Mammary epithelial cell (primary cell): ENCODE measurements at regions of chr20 and their contacts with region 1.

Region 1: DNA sequence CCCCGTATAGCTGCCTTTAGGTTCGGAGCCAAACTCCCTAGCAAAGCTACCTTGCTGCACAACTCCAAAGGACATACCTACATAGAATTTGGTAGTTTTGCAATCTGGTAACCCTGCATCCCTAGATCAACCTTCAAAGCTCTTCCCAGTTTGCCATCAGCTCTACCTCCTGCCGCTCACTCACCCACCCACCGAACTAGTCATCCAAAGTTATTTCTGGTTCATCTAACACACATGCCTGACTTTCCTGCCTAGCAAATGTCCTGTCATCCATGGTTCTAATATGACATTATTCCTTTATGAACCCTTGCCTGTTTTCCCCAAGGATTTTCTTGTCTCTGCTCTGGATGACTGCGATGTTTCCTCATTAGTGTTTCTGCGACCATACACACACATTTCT is 21.6 kb downstream of the SPAG4 start:
- DNase-seq: no peak
- H3K4me3 ChIP-seq: no peak overlapping the region
- H3K27ac ChIP-seq: no peak overlapping the region
- H3K4me1 ChIP-seq: no peaks in the 10 kb centered on the region
- H3K27me3 ChIP-seq: no peaks in the 10 kb centered on the region
- CTCF ChIP-seq: no peak

Region 2: DNA sequence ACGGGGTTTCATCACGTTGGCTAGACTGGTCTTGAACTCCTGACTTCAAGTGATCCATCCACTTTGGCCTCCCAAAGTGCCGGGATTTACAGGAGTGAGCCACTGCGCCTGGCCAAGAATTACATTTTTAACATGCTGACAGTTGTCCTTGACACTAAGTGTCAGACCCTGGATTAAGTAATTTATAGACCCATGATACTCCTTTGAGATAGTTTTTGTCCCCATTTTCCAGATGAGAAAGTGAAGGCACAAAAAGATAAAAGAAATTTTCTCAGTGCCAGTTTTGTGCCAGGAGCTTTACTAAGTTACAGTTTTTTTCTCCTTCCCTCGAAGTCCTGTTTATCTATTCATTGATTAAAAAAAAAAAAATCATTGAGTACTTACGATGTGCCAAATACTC is 480.3 kb before region 1 on chr20:
- CTCF ChIA-PET with region 1: interaction called, 18 read pairs
- dilution Hi-C with region 1: no loop called
- in situ Hi-C with region 1: no loop called
- intact Hi-C with region 1: no loop called
- DNase-seq: no peak
- H3K4me3 ChIP-seq: no peak overlapping the region
- H3K27ac ChIP-seq: no peak overlapping the region
- H3K4me1 ChIP-seq: no peaks in the 10 kb centered on the region
- H3K27me3 ChIP-seq: no peaks in the 10 kb centered on the region
- CTCF ChIP-seq: no peak

Region 3: GRCh38 chr20:35344354-35344837 is 292.9 kb before region 1 on chr20:
- CTCF ChIA-PET with region 1: no interaction called
- dilution Hi-C with region 1: no loop called
- in situ Hi-C with region 1: no loop called
- intact Hi-C with region 1: no loop called
- DNase-seq: peak; percentile 69
- H3K4me3 ChIP-seq: no peak overlapping the region
- H3K27ac ChIP-seq: no peak overlapping the region
- H3K4me1 ChIP-seq: peaks cover 35% of the 10 kb centered on the region
- H3K27me3 ChIP-seq: no peaks in the 10 kb centered on the region
- CTCF ChIP-seq: no peak

Region 4: GRCh38 chr20:35539756-35540212 is 97.5 kb before region 1 on chr20:
- CTCF ChIA-PET with region 1: no interaction called
- dilution Hi-C with region 1: loop called (anchors 5 kb)
- in situ Hi-C with region 1: no loop called
- intact Hi-C with region 1: no loop called
- DNase-seq: no peak
- H3K4me3 ChIP-seq: no peak overlapping the region
- H3K27ac ChIP-seq: no peak overlapping the region
- H3K4me1 ChIP-seq: peaks cover 5% of the 10 kb centered on the region
- H3K27me3 ChIP-seq: no peaks in the 10 kb centered on the region
- CTCF ChIP-seq: no peak

Region 5: GRCh38 chr20:35556871-35557430 is 80.3 kb before region 1 on chr20:
- CTCF ChIA-PET with region 1: no interaction called
- dilution Hi-C with region 1: no loop called
- in situ Hi-C with region 1: no loop called
- intact Hi-C with region 1: no loop called
- DNase-seq: no peak
- H3K4me3 ChIP-seq: no peak overlapping the region
- H3K27ac ChIP-seq: no peak overlapping the region
- H3K4me1 ChIP-seq: no peaks in the 10 kb centered on the region
- H3K27me3 ChIP-seq: no peaks in the 10 kb centered on the region
- CTCF ChIP-seq: no peak

Region 6: DNA sequence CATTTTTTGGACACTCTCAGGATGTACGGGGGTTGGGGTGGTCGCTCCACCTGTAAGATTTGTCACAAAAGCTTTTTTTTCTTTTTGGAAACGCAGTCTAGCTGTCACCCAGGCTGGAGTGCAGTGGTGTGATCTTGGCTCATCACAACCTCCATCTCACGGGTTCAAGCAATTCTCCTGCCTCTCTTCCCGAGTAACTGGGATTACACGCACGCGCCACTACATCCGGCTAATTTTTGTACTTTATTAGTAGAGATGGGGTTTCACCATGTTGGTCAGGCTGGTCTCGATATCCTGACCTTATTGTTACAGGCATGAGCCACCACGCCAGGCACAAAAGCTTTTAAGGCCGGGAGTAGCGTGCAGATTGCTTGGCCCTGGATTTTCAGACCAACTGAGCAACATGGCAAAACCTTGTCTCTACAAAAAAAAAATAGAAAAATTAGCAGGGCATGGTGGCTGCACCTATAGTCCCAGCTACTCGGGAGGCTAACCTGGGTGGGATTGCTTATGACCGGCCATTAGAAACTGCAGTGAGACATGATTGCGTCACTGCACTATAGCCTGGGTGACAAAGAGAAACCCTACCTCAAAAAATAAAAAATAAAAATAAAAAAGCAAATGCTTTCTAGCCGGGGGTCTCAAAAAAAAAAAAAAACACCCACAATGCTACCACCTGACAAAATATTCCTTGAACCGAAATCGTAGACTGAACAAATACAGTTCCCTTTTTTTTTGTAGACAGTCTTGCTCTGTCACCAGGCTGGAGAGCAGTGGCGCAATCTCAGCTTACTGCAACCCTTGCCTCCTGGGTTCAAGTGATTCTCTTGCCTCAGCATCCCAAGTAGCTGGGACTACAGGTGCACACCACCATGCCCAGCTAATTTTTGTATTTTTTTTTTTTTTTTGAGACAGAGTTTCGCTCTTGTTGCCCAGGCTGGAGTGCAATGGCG is 89.8 kb after region 1 on chr20:
- CTCF ChIA-PET with region 1: no interaction called
- dilution Hi-C with region 1: no loop called
- in situ Hi-C with region 1: no loop called
- intact Hi-C with region 1: no loop called
- DNase-seq: no peak
- H3K4me3 ChIP-seq: no peak overlapping the region
- H3K27ac ChIP-seq: no peak overlapping the region
- H3K4me1 ChIP-seq: no peaks in the 10 kb centered on the region
- H3K27me3 ChIP-seq: no peaks in the 10 kb centered on the region
- CTCF ChIP-seq: no peak